ENCODE measurements at regions of chr5 and their contacts with region 1.

Region 1: DNA sequence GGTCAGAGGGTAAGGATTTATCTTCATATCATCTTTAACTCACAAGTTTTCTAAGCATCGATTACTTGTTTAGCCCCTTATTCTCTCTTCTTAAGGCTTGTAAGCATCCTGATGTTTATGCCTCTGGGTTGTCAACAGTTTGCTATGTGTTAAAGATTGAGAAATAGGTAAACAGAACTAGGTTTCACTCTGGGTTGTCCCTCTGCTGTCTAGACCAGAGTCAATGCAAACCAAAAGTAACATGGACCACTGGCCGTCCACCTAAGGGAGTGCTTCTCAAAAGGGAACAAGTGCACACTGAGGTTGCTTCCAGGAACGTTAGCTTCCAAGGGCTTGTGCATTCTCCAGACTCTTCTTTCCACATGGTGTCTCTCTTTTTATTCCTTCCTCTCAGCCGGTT is 39.9 kb upstream of the HAPLN1 start:
- DNase-seq: no peak
- H3K4me3 ChIP-seq: no peak overlapping the region
- H3K27ac ChIP-seq: no peak overlapping the region
- H3K4me1 ChIP-seq: no peaks in the 10 kb centered on the region
- CTCF ChIP-seq: no peak

Region 2: DNA sequence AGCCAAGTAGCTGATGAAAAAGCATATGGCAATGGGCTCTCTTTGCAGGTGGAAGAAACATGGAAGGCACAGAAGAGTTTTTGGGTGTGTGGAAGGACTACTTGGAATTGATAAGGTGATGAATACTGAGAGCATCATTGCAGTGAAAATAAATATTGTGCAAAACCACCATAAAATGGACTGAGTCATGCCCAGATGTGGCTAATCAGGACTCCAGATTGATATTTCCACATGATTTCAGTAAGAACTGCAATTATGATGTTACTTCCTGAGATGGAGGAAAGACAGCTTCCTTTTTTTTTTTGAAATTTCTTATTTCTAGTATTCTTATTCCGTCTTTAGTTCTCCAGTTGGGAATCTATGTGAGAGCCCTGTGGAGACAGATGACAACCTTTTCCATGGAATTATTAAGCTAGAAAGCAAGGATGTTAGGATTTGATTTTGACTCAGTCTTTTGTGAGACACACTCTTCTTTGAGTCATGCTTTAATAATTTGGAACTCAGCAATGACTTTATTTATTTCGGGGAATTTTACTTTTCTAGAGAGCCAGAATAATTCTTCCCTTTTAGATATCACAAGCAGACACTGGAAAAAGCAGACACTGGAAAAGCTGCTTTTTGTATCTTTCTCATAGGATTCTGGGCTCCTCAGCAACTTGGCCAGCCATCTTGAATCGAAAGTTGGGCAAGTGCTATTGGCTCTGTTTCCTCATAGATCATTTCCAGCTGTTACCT is 383.3 kb before region 1 on chr5:
- CTCF ChIA-PET with region 1: no interaction called
- POLR2A ChIA-PET with region 1: no interaction called
- intact Hi-C with region 1: no loop called
- DNase-seq: no peak
- H3K4me3 ChIP-seq: no peak overlapping the region
- H3K27ac ChIP-seq: no peak overlapping the region
- H3K4me1 ChIP-seq: no peaks in the 10 kb centered on the region
- CTCF ChIP-seq: no peak

Region 3: DNA sequence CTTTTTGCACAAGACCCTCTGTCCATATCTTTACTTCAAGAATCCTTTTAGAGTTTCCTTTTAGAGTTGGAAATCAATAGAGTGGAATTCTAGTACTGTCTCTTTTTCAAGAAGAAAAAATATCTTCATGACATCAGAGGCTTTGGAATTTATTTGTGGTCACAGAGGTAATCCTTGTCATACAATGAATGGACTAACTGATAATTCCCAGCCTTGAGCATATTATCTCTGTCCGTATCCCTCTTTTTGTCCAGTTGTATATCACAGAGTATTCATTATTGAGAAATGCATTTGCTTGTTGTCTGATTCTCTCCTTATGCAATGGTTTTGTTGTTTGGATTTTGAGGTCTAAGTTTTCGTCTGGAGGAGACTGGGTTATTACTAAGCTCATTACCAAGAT is 42.1 kb after region 1 on chr5:
- CTCF ChIA-PET with region 1: no interaction called
- POLR2A ChIA-PET with region 1: no interaction called
- intact Hi-C with region 1: loop called (anchors 2 kb)
- DNase-seq: no peak
- H3K4me3 ChIP-seq: no peak overlapping the region
- H3K27ac ChIP-seq: no peak overlapping the region
- H3K4me1 ChIP-seq: no peaks in the 10 kb centered on the region
- CTCF ChIP-seq: no peak

Region 4: DNA sequence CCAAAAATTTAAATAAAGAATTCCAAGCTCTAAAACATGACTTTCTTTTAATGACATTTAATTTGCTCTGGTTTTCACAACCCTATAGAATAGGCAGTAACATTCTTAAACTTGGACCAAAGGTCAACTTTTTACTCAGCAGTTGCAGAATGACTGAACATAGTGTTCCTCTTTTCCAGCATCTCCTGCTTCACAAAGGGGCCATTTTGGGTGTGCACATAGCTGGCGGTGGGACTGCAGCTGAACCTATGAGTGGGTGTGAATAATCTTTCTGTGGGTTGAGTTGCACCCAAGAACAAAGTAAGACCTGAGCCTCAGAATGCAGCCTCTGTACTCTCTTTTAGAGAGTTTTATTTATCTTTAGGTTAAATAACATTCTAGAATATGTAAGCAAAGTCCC is 57.0 kb after region 1 on chr5:
- CTCF ChIA-PET with region 1: no interaction called
- POLR2A ChIA-PET with region 1: no interaction called
- intact Hi-C with region 1: no loop called
- DNase-seq: no peak
- H3K4me3 ChIP-seq: no peak overlapping the region
- H3K27ac ChIP-seq: no peak overlapping the region
- H3K4me1 ChIP-seq: no peaks in the 10 kb centered on the region
- CTCF ChIP-seq: no peak

Measured in OCI-LY7 (cell line).